ENCODE measurements at regions of chr3 and their contacts with region 1.

Region 1: DNA sequence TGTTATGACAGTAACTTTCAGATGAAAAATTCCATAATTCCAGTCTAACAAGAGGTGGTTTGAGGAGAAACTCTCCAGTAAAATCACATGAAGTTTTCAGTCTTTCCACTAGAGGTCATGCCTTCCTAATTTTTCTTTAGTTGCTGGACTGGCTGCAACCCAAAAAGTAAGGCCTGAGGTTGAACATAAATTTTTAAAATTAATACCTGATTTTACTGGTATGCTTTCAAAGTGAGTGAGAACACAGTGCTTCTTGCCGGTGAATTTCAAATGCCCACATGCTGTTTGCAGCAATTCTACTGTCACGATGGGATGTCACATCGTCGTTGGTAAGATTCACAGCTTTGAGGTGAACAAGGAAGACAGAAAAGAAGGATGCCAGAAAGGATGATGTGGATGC is 89.0 kb upstream of the FGF12 start:
- DNase-seq: peak; percentile 33
- ATAC-seq: no peak
- H3K4me3 ChIP-seq: no peak overlapping the region
- H3K27ac ChIP-seq: no peak overlapping the region
- H3K4me1 ChIP-seq: peaks cover 8 to 22% of the 10 kb centered on the region in 2 experiments; a peak in 3 of 4 replicates
- H3K27me3 ChIP-seq: no peaks in the 10 kb centered on the region
- CTCF ChIP-seq: peak; percentile 58 to 73 (median 70)
- POLR2A ChIP-seq: no peak
- RAD21 ChIP-seq: peak; percentile 91

Region 2: GRCh38 chr3:192917404-192918274 is 101.3 kb after region 1 on chr3 and contains the start of gene MB21D2:
- CTCF ChIA-PET with region 1: interaction called, 5 read pairs
- POLR2A ChIA-PET with region 1: no interaction called
- RAD21 ChIA-PET with region 1: interaction called in 1 of 2 experiments, 3 read pairs
- intact Hi-C with region 1: loop called (anchors 2 kb)
- DNase-seq: peak; percentile 69
- ATAC-seq: peak; percentile 89
- H3K4me3 ChIP-seq: peak within 1 kb of the TSS; percentile 74 to 88
- H3K27ac ChIP-seq: peak within 1 kb of the TSS; percentile 58
- H3K4me1 ChIP-seq: peaks cover 0 to 19% of the 10 kb centered on the region in 2 experiments; a peak in 2 of 4 replicates
- H3K27me3 ChIP-seq: no peaks in the 10 kb centered on the region
- CTCF ChIP-seq: no peak
- POLR2A ChIP-seq: peak; percentile 82
- RAD21 ChIP-seq: no peak; the same call in 1 of the 2 replicates
- total RNA-seq, gene MB21D2: 2.8 TPM

Region 3: DNA sequence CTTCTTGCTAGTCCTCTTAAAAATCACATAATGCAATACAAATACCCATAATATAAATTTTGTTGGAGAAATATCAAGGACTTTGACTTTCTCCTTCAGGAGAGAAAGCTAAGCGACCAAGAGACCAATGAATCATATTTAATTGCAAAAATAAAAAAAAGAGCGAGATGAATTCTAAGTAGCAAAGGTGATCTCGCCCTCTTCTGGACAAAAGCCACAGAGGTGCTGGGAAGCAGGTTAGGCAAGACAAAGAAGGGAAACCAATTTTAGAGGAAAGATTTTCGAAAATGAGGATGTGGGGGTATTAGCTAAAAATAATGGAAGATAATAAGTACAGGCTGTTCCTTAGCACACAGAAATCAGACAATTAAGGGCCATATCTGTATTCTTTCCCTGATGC is 313.2 kb after region 1 on chr3:
- CTCF ChIA-PET with region 1: interaction called, 6 read pairs
- POLR2A ChIA-PET with region 1: no interaction called
- RAD21 ChIA-PET with region 1: interaction called in 1 of 2 experiments, 3 read pairs
- intact Hi-C with region 1: loop called (anchors 1 kb)
- DNase-seq: no peak
- ATAC-seq: peak; percentile 46; the same call in 1 of the 2 replicates
- H3K4me3 ChIP-seq: no peak overlapping the region
- H3K27ac ChIP-seq: no peak overlapping the region
- H3K4me1 ChIP-seq: no peaks in the 10 kb centered on the region
- H3K27me3 ChIP-seq: peaks cover 68% of the 10 kb centered on the region
- CTCF ChIP-seq: peak; percentile 28 to 37 (median 33); a peak in 4 of 6 replicates
- POLR2A ChIP-seq: no peak
- RAD21 ChIP-seq: peak; percentile 49

Region 4: DNA sequence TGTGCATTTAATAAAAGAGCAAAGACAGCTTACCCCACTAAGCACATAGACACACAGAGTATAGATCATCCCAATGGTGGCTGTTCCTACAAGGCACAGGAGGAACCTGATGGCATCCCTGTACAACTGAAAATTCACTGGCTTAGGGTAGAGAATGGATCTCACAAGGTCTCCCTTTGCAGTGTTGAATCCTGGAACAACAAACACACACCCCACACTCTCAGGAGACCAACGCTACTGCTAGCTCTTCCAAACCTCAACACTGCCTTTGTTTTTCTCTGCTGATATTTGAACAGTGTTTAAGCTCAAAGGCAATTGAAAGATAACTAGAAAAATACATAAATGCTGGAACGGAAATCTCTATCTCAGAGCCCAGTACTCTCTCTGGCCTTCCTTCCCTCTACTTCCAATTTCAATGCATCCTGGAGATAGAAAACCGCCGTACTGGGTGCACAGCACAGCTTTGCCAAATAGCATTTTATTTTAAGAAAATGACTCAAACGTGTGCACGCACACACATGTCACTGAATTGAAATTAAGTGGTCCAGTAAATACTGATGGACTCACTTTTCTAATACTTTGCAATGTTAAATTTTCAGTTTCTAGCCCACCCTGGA is 649.7 kb after region 1 on chr3:
- CTCF ChIA-PET with region 1: no interaction called
- POLR2A ChIA-PET with region 1: no interaction called
- RAD21 ChIA-PET with region 1: no interaction called
- intact Hi-C with region 1: loop called (anchors 5 kb)
- DNase-seq: no peak
- ATAC-seq: no peak
- H3K4me3 ChIP-seq: no peak overlapping the region
- H3K27ac ChIP-seq: no peak overlapping the region
- H3K4me1 ChIP-seq: no peaks in the 10 kb centered on the region
- H3K27me3 ChIP-seq: peaks cover 41% of the 10 kb centered on the region
- CTCF ChIP-seq: no peak
- POLR2A ChIP-seq: no peak
- RAD21 ChIP-seq: no peak

Region 5: DNA sequence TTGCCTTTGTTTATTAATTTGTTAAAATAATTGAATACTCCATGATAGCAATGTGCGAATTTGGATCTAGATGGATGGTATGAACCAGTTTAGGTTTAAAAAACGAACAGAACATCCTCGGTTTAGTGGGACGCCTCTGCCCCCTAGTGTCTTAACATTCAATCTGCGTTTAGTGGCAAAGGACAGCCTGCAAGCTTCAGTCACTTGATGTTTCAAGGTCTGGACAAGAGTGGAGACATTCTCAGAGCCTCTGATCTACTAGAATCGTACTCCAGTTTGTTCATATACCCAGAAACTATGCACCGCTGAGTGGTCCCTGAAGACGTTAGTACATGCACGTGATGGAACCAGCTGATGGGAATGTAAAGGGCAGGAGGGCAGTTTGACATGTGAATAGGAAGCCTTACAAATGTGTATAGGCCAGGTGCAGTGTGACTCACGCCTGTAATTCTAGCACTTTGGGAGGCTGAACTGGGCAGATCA is 756.1 kb after region 1 on chr3:
- CTCF ChIA-PET with region 1: interaction called, 18 read pairs
- POLR2A ChIA-PET with region 1: no interaction called
- RAD21 ChIA-PET with region 1: interaction called in 1 of 2 experiments, 4 read pairs
- intact Hi-C with region 1: loop called (anchors 1 kb)
- DNase-seq: peak; percentile 65
- ATAC-seq: peak; percentile 96
- H3K4me3 ChIP-seq: no peak overlapping the region
- H3K27ac ChIP-seq: no peak overlapping the region
- H3K4me1 ChIP-seq: peaks cover 0 to 2% of the 10 kb centered on the region in 2 experiments; a peak in 1 of 4 replicates
- H3K27me3 ChIP-seq: peaks cover 18% of the 10 kb centered on the region; the same call in 1 of the 2 replicates
- CTCF ChIP-seq: peak; percentile 73 to 92 (median 82); a peak in 5 of 6 replicates
- POLR2A ChIP-seq: no peak
- RAD21 ChIP-seq: peak; percentile 91